H1 (cell line): ENCODE measurements at regions of chr11 and their contacts with region 1.

Region 1: DNA sequence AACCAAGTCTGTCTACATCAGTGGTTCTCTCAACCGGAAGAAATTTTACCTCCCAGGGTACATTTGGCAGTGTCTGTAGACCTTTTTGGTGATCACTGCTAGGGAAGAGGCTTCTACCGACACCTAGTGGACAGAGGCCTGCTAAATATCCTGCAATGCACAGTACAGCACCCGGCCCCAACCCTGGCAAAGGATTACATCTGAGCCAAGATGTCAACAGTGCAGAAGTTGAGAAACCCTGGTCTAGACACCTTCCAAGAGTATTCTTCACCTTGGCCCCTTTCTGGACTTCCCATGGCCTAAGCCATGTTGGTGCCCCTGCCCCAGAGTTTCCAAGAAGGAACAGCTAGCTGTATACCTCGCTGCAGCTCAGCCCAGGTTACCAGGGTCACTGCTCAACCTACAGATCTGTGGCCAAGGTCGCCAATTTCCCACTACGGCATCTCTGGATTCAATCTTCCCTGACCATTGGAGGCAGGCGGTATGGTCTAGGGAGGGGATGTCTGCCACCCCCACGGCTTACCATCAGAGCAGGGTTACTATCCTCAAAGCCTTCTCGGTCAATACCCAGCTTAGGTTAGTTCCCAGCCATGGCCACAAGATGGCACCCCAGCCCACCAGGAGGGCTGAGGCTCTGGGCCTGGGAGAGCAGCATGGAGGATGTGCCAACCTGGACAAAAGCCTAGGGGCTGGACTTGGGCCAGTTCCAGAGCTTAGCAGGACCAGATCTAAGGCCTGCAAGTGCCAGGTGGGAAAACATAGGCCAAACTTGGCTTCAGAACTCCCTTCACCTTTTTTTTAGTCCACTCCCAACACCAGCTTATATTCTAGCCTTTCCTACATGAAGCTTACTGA is 3.7 kb upstream of the KCNC1 start:
- DNase-seq: peak; percentile 58 to 95
- H3K4me3 ChIP-seq: no peak overlapping the region
- H3K27ac ChIP-seq: no peak overlapping the region
- H3K4me1 ChIP-seq: peaks cover 0 to 4% (median under 1%) of the 10 kb centered on the region in 4 experiments; a peak in 3 of 7 replicates
- H3K27me3 ChIP-seq: peaks cover 9 to 30% (median 24%) of the 10 kb centered on the region in 4 experiments
- CTCF ChIP-seq: peak; percentile 93 to 98 (median 94)
- EP300 ChIP-seq: no peak
- POLR2A ChIP-seq: no peak
- RAD21 ChIP-seq: peak; percentile 98

Region 2: GRCh38 chr11:17504330-17505107 is 226.3 kb before region 1 on chr11:
- CTCF ChIA-PET with region 1: no interaction called
- POLR2A ChIA-PET with region 1: no interaction called
- DNase-seq: peak in 1 of 2 experiments; percentile 93
- H3K4me3 ChIP-seq: no peak overlapping the region
- H3K27ac ChIP-seq: no peak overlapping the region
- H3K4me1 ChIP-seq: no peaks in the 10 kb centered on the region; a peak in 1 of 7 replicates
- H3K27me3 ChIP-seq: peaks cover 0 to 2% (median 0%) of the 10 kb centered on the region in 4 experiments; a peak in 1 of 7 replicates
- CTCF ChIP-seq: peak; percentile 87 to 96 (median 91)
- EP300 ChIP-seq: no peak
- POLR2A ChIP-seq: no peak
- RAD21 ChIP-seq: peak; percentile 95 to 98

Region 3: DNA sequence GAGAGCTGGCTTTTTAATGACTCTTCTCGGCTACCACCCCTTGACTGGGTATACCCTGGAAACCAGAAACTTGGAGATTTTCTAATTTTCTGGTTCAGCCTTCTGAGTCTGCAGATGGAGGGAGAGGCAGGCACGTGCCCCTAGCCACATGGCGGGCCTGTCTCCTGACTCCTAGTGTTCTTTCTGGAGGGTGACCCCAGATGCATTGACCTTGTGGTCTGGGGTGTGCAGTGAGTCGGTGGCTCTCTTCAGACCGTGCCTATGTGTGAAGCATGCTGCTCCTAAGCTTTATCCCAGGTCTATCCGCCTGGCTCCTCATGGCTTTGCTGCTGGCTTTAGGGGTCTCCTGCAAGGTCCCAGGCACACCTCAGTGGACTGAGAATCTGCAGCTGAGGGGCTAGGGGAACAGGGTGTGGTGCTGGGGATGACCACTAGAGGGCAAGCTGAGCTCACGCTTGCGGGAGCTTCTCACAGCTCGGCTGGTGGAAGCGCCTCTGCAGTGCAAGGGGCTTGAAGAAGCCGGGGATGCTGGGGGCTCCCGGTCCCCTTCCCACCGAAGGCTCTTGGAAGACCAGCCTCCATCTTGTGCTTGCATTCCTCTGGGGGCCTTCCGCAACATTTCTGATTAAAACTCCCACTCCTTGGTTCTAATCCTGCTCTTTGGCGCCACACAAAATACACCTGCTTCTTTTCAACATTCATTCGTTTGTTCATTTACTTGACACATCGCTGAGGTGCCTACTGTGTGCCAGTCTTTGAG is 132.0 kb before region 1 on chr11:
- CTCF ChIA-PET with region 1: interaction called, 165 read pairs
- POLR2A ChIA-PET with region 1: no interaction called
- DNase-seq: peak; percentile 75 to 96
- H3K4me3 ChIP-seq: no peak overlapping the region
- H3K27ac ChIP-seq: no peak overlapping the region
- H3K4me1 ChIP-seq: peaks cover 0 to 4% (median 2%) of the 10 kb centered on the region in 4 experiments; a peak in 3 of 7 replicates
- H3K27me3 ChIP-seq: peaks cover 0 to 10% (median 4%) of the 10 kb centered on the region in 4 experiments; a peak in 2 of 7 replicates
- CTCF ChIP-seq: peak; percentile 97 to 99 (median 99)
- EP300 ChIP-seq: no peak
- POLR2A ChIP-seq: no peak
- RAD21 ChIP-seq: peak; percentile 98 to 99

Region 4: GRCh38 chr11:17702876-17703275 is 28.0 kb before region 1 on chr11:
- CTCF ChIA-PET with region 1: interaction called, 11 read pairs
- POLR2A ChIA-PET with region 1: no interaction called
- DNase-seq: no peak
- H3K4me3 ChIP-seq: no peak overlapping the region
- H3K27ac ChIP-seq: no peak overlapping the region
- H3K4me1 ChIP-seq: no peaks in the 10 kb centered on the region; a peak in 1 of 7 replicates
- H3K27me3 ChIP-seq: peaks cover 0 to 3% (median 0%) of the 10 kb centered on the region in 4 experiments; a peak in 1 of 7 replicates
- CTCF ChIP-seq: no peak
- EP300 ChIP-seq: no peak
- POLR2A ChIP-seq: no peak
- RAD21 ChIP-seq: no peak

Region 5: DNA sequence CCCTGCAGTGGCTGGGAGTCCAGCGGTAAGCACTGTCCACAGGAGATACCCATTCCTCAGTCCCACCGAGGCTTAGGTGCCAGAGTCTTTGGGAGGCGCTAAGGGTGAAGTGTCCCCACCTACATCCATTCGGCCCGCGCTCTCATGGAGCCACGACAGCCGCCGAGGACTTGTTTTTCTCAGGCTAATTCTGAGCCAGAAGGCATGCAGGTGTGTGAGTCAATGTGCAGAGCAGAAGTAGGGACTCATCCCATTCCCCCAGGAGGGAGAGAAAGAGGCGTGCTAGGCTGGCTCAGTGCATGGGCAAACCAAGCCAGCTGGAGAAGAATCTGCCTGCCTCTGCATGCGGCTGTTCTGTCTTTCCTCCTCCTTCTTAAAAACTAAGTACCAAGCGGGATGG is 50.4 kb after region 1 on chr11:
- CTCF ChIA-PET with region 1: interaction called, 14 read pairs
- POLR2A ChIA-PET with region 1: no interaction called
- DNase-seq: no peak
- H3K4me3 ChIP-seq: no peak overlapping the region
- H3K27ac ChIP-seq: no peak overlapping the region
- H3K4me1 ChIP-seq: no peaks in the 10 kb centered on the region
- H3K27me3 ChIP-seq: no peaks in the 10 kb centered on the region
- CTCF ChIP-seq: no peak
- EP300 ChIP-seq: no peak
- POLR2A ChIP-seq: no peak
- RAD21 ChIP-seq: no peak

Region 6: GRCh38 chr11:17898071-17898470 is 167.2 kb after region 1 on chr11:
- CTCF ChIA-PET with region 1: interaction called, 20 read pairs
- POLR2A ChIA-PET with region 1: no interaction called
- DNase-seq: no peak
- H3K4me3 ChIP-seq: no peak overlapping the region
- H3K27ac ChIP-seq: no peak overlapping the region
- H3K4me1 ChIP-seq: 0 out of 7 replicates have a peak, but pooled peaks cover 0 to 2% (median 0%) of the 10 kb centered on the region in 4 experiments
- H3K27me3 ChIP-seq: no peaks in the 10 kb centered on the region
- CTCF ChIP-seq: no peak
- EP300 ChIP-seq: no peak
- POLR2A ChIP-seq: no peak
- RAD21 ChIP-seq: no peak

Region 7: GRCh38 chr11:17978553-17979287 is 247.9 kb after region 1 on chr11:
- CTCF ChIA-PET with region 1: interaction called, 276 read pairs
- POLR2A ChIA-PET with region 1: no interaction called
- DNase-seq: peak in 1 of 2 experiments; percentile 71
- H3K4me3 ChIP-seq: no peak overlapping the region
- H3K27ac ChIP-seq: no peak overlapping the region
- H3K4me1 ChIP-seq: no peaks in the 10 kb centered on the region
- H3K27me3 ChIP-seq: no peaks in the 10 kb centered on the region
- CTCF ChIP-seq: peak; percentile 91 to 97 (median 94)
- EP300 ChIP-seq: no peak
- POLR2A ChIP-seq: no peak
- RAD21 ChIP-seq: peak; percentile 77 to 79

Region 8: DNA sequence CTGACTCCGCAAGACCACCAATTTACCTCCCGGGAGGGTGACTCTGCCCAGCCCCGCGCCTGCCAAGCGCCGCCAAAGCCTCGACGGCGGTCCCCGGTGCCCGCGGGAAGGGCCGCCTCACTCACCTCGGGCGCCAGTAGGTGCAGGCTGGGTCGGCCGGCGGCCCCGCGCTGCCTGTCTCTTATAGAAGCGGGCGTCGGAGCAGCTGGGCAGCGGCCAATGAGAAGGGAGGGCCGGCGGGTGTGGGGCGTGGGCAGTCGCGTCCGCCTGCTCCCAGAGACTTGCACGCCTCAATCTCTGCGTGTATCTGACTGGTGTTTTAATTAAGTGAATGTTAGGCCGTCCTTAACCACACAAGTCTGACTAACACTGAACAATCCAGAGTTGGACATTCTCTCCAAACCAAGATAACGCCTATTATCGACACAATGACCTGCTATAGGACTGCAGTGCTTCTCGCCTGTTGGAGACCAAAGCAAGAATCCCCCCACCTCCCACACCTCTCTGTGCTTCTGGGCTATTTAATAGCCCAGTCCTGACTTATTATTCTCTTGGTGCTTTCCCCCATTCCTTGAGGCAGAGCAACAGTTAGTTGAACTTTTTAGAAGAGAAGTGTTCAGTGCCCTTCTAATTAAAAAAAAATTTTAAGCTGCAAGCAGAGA is 315.4 kb after region 1 on chr11 and contains the start of gene TPH1:
- CTCF ChIA-PET with region 1: no interaction called
- POLR2A ChIA-PET with region 1: no interaction called
- DNase-seq: peak; percentile 3 to 75
- H3K4me3 ChIP-seq: peak within 1 kb of the TSS; percentile 21 to 50 (median 24); a peak in 5 of 8 replicates
- H3K27ac ChIP-seq: no peak within 1 kb of the TSS
- H3K4me1 ChIP-seq: peaks cover 0 to 4% (median 2%) of the 10 kb centered on the region in 4 experiments; a peak in 2 of 7 replicates
- H3K27me3 ChIP-seq: peaks cover 1 to 36% (median 18%) of the 10 kb centered on the region in 4 experiments
- CTCF ChIP-seq: no peak
- EP300 ChIP-seq: no peak
- POLR2A ChIP-seq: no peak
- RAD21 ChIP-seq: no peak
- total RNA-seq, gene TPH1: 0.08 and 0.22 TPM in 2 replicates